ENCODE measurements at regions of chr6 and their contacts with region 1.

Region 1: DNA sequence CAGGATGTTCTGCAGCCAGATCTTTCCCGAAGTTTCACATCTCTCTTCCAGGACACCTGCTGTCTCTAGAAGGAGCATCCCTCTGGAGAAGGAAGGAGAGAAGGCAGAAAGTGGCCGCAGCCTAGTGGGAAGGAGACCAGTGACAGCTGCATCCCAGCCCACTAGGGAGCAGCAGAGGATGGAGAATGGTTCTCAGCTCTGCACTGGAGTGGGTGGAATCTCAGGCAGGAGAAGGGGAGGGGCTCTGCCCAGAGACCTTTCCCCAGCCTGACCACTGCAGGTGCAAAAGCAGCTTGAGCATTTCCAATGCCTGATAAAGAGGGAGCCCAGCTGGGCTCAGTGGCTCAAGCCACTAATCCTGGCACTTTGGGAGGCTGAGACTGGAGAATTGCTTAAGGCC is 32.3 kb downstream of the NCR2 start:
- DNase-seq: peak in 1 of 2 experiments; percentile 79
- H3K4me3 ChIP-seq: no peak overlapping the region
- H3K27ac ChIP-seq: no peak overlapping the region
- H3K4me1 ChIP-seq: peaks cover 3 to 22% (median 11%) of the 10 kb centered on the region in 4 experiments
- H3K27me3 ChIP-seq: peaks cover 31 to 38% (median 38%) of the 10 kb centered on the region in 4 experiments
- CTCF ChIP-seq: peak in 2 of 3 experiments; percentile 97; a peak in 3 of 4 replicates
- EP300 ChIP-seq: no peak
- POLR2A ChIP-seq: no peak
- RAD21 ChIP-seq: peak; percentile 98 to 99

Region 2: DNA sequence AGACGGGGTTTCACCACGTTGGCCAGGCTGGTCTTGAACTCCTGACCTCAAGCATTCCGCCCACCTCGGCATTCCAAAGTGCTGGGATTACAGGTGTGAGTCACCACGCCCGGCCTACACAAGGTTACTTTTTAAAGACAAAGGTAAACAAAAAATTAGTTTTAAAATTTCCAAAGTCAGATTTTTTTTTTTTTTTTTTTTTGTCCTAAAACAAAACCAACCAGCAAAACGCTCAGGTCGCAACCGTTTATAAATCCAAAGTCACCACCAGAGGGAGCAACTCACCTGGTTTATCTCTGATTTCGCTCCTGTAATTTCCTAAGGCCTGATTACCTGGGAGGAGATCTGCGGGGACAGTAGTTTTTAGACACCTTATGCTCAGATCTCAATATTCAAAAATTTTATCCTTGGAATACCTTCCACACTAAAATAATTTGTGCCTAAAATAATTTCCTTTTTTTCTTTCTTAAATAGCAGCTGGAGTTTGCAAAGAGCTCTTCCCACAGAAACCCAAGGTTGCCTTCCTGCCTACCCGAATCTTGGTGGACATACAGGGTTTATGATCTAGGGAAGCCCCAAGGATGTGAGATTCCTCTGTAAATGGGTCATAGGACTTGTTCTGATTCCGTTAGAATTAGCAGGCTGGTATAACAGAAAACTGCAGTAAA is 61.4 kb before region 1 on chr6:
- CTCF ChIA-PET with region 1: interaction called, 10 read pairs
- POLR2A ChIA-PET with region 1: no interaction called
- DNase-seq: no peak
- H3K4me3 ChIP-seq: no peak overlapping the region
- H3K27ac ChIP-seq: no peak overlapping the region
- H3K4me1 ChIP-seq: peaks cover 0 to 3% (median 0%) of the 10 kb centered on the region in 4 experiments; a peak in 1 of 7 replicates
- H3K27me3 ChIP-seq: no peaks in the 10 kb centered on the region; a peak in 1 of 7 replicates
- CTCF ChIP-seq: peak in 2 of 3 experiments; percentile 63 to 67; a peak in 3 of 4 replicates
- EP300 ChIP-seq: no peak
- POLR2A ChIP-seq: no peak
- RAD21 ChIP-seq: peak; percentile 57 to 72

Region 3: GRCh38 chr6:41396335-41396734 is 28.6 kb after region 1 on chr6:
- CTCF ChIA-PET with region 1: interaction called, 16 read pairs
- POLR2A ChIA-PET with region 1: no interaction called
- DNase-seq: no peak
- H3K4me3 ChIP-seq: no peak overlapping the region
- H3K27ac ChIP-seq: no peak overlapping the region
- H3K4me1 ChIP-seq: peaks cover 0 to 3% (median 0%) of the 10 kb centered on the region in 4 experiments; a peak in 2 of 7 replicates
- H3K27me3 ChIP-seq: peaks cover 1 to 19% (median 12%) of the 10 kb centered on the region in 4 experiments; a peak in 6 of 7 replicates
- CTCF ChIP-seq: no peak
- EP300 ChIP-seq: no peak
- POLR2A ChIP-seq: no peak
- RAD21 ChIP-seq: no peak

Region 4: GRCh38 chr6:41455818-41456217 is 88.1 kb after region 1 on chr6:
- CTCF ChIA-PET with region 1: interaction called, 14 read pairs
- POLR2A ChIA-PET with region 1: no interaction called
- DNase-seq: no peak
- H3K4me3 ChIP-seq: no peak overlapping the region
- H3K27ac ChIP-seq: no peak overlapping the region
- H3K4me1 ChIP-seq: peaks cover 5 to 15% (median 8%) of the 10 kb centered on the region in 4 experiments
- H3K27me3 ChIP-seq: peaks cover 0 to 8% (median 0%) of the 10 kb centered on the region in 4 experiments; a peak in 4 of 7 replicates
- CTCF ChIP-seq: no peak
- EP300 ChIP-seq: no peak
- POLR2A ChIP-seq: no peak
- RAD21 ChIP-seq: no peak

Region 5: DNA sequence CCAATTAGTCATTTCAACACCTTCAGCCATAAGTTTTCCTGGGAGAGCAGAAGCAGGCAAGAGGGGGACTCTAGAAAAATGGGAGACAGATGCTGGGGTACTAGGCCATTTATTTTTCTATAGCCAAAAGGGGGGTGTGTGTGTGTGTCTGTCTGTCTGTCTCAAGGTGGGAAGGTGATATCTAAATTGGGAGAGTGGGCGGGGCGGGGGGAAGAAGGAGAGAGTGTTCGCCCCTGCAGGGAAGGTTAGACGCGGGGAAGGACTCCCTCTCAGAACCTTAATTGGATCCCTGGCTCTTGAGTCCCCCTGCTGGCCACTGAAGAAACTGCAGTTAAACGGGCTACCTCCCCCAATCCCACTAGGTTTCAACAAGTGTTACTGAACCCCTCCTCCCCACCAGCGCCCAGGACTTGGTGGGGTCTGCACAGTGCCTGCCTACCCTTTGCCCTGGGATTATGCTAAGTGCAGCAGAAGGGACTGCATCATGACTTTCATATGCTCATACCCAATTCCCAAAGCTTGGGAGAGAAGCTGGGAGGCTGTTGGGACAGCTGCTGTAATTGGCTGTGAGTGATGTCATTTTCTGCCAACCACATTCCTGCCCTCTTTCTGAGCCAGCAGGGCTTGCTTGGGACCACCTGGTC is 224.3 kb after region 1 on chr6:
- CTCF ChIA-PET with region 1: interaction called, 238 read pairs
- POLR2A ChIA-PET with region 1: no interaction called
- DNase-seq: peak in 1 of 2 experiments; percentile 97
- H3K4me3 ChIP-seq: no peak overlapping the region
- H3K27ac ChIP-seq: no peak overlapping the region
- H3K4me1 ChIP-seq: peaks cover 3 to 17% (median 9%) of the 10 kb centered on the region in 4 experiments
- H3K27me3 ChIP-seq: no peaks in the 10 kb centered on the region
- CTCF ChIP-seq: peak in 2 of 3 experiments; percentile 90 to 91; a peak in 3 of 4 replicates
- EP300 ChIP-seq: no peak
- POLR2A ChIP-seq: no peak
- RAD21 ChIP-seq: peak; percentile 95 to 96

Region 6: DNA sequence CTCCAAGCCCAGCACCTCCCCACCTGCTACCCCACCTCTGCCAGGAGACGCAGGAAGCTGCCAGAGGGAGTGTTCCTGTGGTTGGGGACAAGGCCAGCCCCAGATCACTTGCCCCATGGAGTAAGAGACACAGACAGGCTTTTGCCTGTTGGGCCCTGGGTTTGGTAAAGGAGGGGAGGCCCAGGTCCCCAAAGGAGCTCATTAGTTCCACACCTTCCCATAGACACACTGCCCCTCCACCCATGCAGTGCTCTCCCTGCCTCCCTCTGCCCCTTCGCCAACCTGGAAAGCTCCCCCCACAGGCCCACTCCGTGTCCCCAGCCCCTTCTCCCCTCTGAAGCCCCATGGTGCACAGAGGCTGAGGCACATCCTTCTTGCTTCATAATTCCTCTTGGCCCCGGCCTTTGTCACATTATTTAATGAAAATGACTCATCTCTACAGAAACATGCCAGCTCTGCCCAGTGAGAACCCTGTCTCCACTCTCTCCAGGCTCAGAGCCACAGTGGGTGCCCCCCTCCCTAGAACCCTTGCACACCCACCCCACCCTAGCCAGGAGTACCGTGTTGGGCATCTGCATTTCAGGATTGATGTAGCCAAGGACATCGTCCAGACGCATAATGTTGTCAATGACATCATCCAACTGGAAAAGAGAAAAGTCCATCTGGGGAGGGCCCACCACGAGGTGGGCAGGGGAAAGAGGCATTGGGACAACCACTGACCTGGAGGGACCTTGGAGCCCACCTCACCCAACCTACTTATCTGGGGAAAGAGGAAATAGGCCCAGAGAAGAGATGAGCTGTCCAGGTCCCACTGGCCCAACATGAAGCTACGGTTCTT is 321.7 kb after region 1 on chr6:
- CTCF ChIA-PET with region 1: interaction called, 142 read pairs
- POLR2A ChIA-PET with region 1: interaction called, 5 read pairs
- DNase-seq: no peak
- H3K4me3 ChIP-seq: no peak overlapping the region
- H3K27ac ChIP-seq: no peak overlapping the region
- H3K4me1 ChIP-seq: peaks cover 5 to 16% (median 6%) of the 10 kb centered on the region in 4 experiments; a peak in 6 of 7 replicates
- H3K27me3 ChIP-seq: no peaks in the 10 kb centered on the region; a peak in 1 of 7 replicates
- CTCF ChIP-seq: no peak
- EP300 ChIP-seq: no peak
- POLR2A ChIP-seq: no peak
- RAD21 ChIP-seq: no peak

Region 7: DNA sequence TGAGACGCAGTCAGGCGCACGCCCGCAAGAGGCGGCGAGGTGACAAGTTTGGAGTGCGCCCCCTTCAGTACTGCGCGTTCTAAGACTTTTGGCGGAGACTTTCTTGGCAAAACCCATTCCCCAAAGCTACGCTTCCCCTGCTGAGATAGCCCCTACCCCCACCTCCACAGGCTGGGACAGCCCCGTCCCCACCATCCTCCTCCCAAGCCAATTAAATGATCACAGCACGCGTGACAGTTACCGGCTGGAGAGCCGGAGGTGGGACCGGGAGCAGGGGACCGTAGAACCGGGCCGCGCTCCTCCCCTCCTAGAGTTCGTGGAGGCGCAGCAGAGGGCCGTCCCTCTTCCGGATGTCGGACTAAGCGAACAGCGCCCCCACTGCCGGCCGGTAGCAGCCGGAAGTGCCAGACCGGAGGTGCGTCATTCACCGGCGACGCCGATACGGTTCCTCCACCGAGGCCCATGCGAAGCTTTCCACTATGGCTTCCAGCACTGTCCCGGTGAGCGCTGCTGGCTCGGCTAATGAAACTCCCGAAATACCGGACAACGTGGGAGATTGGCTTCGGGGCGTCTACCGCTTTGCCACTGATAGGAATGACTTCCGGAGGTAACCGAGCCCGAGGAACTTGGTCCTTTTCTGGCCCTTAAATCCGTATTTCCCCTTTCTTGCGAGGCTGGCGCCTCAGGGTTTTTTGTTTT is 419.7 kb after region 1 on chr6 and contains the start of gene TOMM6:
- CTCF ChIA-PET with region 1: interaction called, 20 read pairs
- POLR2A ChIA-PET with region 1: no interaction called
- DNase-seq: peak; percentile 77 to 98
- H3K4me3 ChIP-seq: peak within 1 kb of the TSS; percentile 94 to 100 (median 98)
- H3K27ac ChIP-seq: peak within 1 kb of the TSS; percentile 81
- H3K4me1 ChIP-seq: peaks cover 0 to 4% (median 3%) of the 10 kb centered on the region in 4 experiments; a peak in 6 of 7 replicates
- H3K27me3 ChIP-seq: peaks cover 0 to 27% (median 21%) of the 10 kb centered on the region in 4 experiments; a peak in 6 of 7 replicates
- CTCF ChIP-seq: peak; percentile 90 to 92 (median 90)
- EP300 ChIP-seq: peak in 1 of 2 experiments; percentile 48; a peak in 1 of 3 replicates
- POLR2A ChIP-seq: peak; percentile 90 to 97
- RAD21 ChIP-seq: peak; percentile 1 to 15; a peak in 2 of 4 replicates
- total RNA-seq, gene TOMM6: 216 and 228 TPM in 2 replicates